ENCODE measurements at regions of chr2 and their contacts with region 1.

Region 1: GRCh38 chr2:27086090-27086723 is 365 bp upstream of the KHK start:
- DNase-seq: peak; percentile 100
- H3K4me3 ChIP-seq: peak overlapping the region; percentile 65 to 75
- H3K27ac ChIP-seq: peak overlapping the region; percentile 37 to 89; a peak in 3 of 4 replicates
- H3K4me1 ChIP-seq: peaks cover 9 to 46% of the 10 kb centered on the region in 2 experiments; a peak in 3 of 4 replicates
- H3K27me3 ChIP-seq: no peaks in the 10 kb centered on the region
- CTCF ChIP-seq: peak; percentile 69
- EP300 ChIP-seq: peak in 1 of 2 experiments; percentile 42; a peak in 1 of 4 replicates
- RAD21 ChIP-seq: peak; percentile 52

Region 2: DNA sequence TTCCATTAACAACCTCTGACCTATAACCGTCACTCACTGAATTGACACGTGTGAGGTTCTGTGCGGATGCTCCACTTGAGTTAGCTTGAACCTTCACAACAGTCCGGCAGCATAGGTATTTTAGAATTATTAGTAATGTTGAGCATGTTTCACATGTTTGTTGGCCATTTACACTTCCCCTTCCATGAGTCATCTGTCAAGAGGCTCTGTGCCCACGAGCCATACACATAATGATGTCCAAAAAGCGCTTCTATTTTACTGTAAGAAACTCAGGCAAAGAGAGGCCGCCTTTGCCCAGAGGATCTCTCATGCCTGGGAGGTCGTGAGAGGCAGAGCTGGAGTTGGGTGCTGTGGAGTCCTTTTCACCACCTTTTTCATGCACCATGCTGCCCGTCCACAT is 82.3 kb before region 1 on chr2:
- CTCF ChIA-PET with region 1: no interaction called
- POLR2A ChIA-PET with region 1: no interaction called
- DNase-seq: no peak
- H3K4me3 ChIP-seq: no peak overlapping the region
- H3K27ac ChIP-seq: no peak overlapping the region
- H3K4me1 ChIP-seq: 0 out of 4 replicates have a peak, but pooled peaks cover 0 to 7% of the 10 kb centered on the region in 2 experiments
- H3K27me3 ChIP-seq: no peaks in the 10 kb centered on the region
- CTCF ChIP-seq: no peak
- EP300 ChIP-seq: no peak
- RAD21 ChIP-seq: no peak

Region 3: GRCh38 chr2:27032495-27033252 is 53.5 kb before region 1 on chr2 and contains the start of gene TMEM214:
- CTCF ChIA-PET with region 1: interaction called, 17 read pairs
- POLR2A ChIA-PET with region 1: interaction called, 4 read pairs
- DNase-seq: peak; percentile 99
- H3K4me3 ChIP-seq: peak within 1 kb of the TSS; percentile 87 to 95
- H3K27ac ChIP-seq: peak within 1 kb of the TSS; percentile 54 to 75; a peak in 2 of 4 replicates
- H3K4me1 ChIP-seq: peaks cover 8 to 17% of the 10 kb centered on the region in 2 experiments; a peak in 3 of 4 replicates
- H3K27me3 ChIP-seq: no peaks in the 10 kb centered on the region
- CTCF ChIP-seq: no peak
- EP300 ChIP-seq: no peak
- RAD21 ChIP-seq: no peak
- polyA plus RNA-seq, gene TMEM214: 69.4 and 80.2 TPM in 2 replicates

Region 4: GRCh38 chr2:27071277-27071989 is 14.8 kb before region 1 on chr2 and contains the start of gene OST4:
- CTCF ChIA-PET with region 1: interaction called, 227 read pairs
- POLR2A ChIA-PET with region 1: interaction called, 63 read pairs
- DNase-seq: peak; percentile 100
- H3K4me3 ChIP-seq: peak within 1 kb of the TSS; percentile 97 to 98
- H3K27ac ChIP-seq: peak within 1 kb of the TSS; percentile 89 to 98
- H3K4me1 ChIP-seq: peaks cover 44 to 66% of the 10 kb centered on the region in 2 experiments
- H3K27me3 ChIP-seq: no peaks in the 10 kb centered on the region
- CTCF ChIP-seq: peak; percentile 8; the same call in 1 of the 2 replicates
- EP300 ChIP-seq: peak in 1 of 2 experiments; percentile 41; a peak in 1 of 4 replicates
- RAD21 ChIP-seq: no peak
- polyA plus RNA-seq, gene OST4: 876 and 1,851 TPM in 2 replicates

Measured in SK-N-SH (cell line).